Activated CD4-positive, alpha-beta T cell treated with anti-CD3 and anti-CD28 coated beads, Interleukin-2, amount 10 ng/mL, durations not matched to agents 7 days and 5 days (primary cell): ENCODE measurements at regions of chr1 and their contacts with region 1.

Region 1: GRCh38 chr1:110619412-110620249 is 13.5 kb upstream of the KCNA2 start:
- DNase-seq: peak; percentile 92
- H3K4me3 Mint-ChIP-seq: peak overlapping the region; percentile 78
- H3K27ac Mint-ChIP-seq: peak overlapping the region; percentile 97
- H3K4me1 Mint-ChIP-seq: peaks cover 56% of the 10 kb centered on the region
- H3K27me3 Mint-ChIP-seq: no peaks in the 10 kb centered on the region

Region 2: GRCh38 chr1:110605901-110606656 is 13.6 kb before region 1 on chr1 and contains the start of gene KCNA2:
- CTCF ChIA-PET with region 1: interaction called, 13 read pairs
- POLR2A ChIA-PET with region 1: no interaction called
- DNase-seq: no peak
- H3K4me3 Mint-ChIP-seq: peak within 1 kb of the TSS; percentile 67
- H3K27ac Mint-ChIP-seq: peak within 1 kb of the TSS; percentile 46
- H3K4me1 Mint-ChIP-seq: peaks cover 29% of the 10 kb centered on the region
- H3K27me3 Mint-ChIP-seq: peaks cover 50% of the 10 kb centered on the region
- total RNA-seq, gene KCNA2: 3.5 to 3.9 TPM

Region 3: DNA sequence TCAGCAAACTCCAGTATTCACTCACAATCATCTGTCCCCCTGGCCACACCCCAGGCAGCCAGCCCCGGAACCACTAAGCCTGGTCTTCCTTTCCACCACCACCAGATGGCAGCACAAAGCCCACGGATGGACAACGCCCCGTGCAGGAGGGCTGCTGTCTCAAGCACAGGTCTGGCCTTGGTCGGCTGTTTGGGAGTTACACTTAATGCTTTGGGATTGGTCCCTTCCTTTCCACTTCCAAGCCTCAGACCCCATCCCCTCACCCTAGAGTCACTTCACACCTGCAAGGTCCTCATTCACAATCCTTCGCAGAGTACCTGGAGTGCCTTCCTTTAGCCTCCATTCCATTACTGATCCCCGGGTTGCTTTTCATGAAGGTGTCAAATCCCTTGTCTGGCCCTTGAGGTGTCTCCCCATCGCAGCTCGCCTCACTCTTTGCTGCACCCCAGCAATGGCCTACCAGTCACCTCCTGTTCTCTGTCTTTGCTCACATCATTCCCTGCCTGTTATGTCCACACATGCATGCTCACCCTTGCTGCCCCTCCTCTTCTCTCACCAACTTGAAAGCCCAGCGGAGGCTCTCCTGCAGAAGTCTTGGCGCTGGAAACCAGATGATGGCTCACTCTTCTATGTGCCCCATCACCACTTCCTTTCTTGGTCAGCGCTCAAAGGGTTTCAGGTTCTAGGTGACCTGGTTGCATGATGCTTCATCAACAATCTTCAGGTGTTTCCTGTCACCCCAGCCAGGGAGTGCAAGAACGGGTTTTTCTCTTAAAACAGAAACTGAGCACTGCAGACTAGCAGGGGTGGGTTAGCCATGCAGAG is 11.4 kb after region 1 on chr1:
- CTCF ChIA-PET with region 1: interaction called, 34 read pairs
- POLR2A ChIA-PET with region 1: interaction called, 6 read pairs
- DNase-seq: peak; percentile 93
- H3K4me3 Mint-ChIP-seq: no peak overlapping the region
- H3K27ac Mint-ChIP-seq: no peak overlapping the region
- H3K4me1 Mint-ChIP-seq: peaks cover 33% of the 10 kb centered on the region
- H3K27me3 Mint-ChIP-seq: no peaks in the 10 kb centered on the region

Region 4: DNA sequence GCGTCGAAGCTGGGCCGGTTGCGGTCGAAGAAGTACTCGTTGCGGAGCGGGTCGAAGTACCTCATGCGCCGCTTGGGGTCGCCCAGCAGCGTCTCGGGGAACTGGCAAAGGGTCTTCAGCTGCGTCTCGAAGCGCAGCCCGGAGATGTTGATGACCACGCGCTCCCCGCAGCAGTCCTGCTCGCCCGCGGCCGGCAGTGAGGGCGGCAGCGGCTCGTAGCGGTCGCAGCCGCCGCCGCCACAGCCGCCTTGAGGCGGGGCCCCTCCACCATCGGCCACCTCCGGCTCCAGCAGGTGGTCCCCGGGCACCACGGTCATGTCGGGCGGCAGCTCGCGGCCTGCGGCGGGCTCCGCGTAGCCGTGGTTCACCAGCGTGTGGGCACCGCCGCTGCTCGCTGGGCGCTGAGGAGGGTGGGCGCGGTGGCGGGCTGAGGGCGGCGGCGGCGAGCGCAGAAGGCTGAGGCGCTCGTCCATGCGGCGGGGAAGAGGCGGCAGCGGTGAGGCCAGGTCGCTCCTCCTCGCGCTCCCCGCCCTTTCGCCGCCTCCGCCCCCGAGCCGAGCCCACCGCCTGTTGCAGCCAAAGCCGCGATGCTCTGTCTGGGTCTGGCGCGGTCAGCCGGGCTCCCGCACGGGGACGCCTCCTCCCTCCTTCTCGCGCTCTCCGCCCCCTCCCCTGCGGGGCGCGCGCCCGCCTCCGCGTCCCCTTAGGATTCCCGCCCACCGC is 54.9 kb after region 1 on chr1 and contains the start of gene KCNA3:
- CTCF ChIA-PET with region 1: interaction called, 14 read pairs
- POLR2A ChIA-PET with region 1: interaction called, 11 read pairs
- DNase-seq: peak; percentile 67
- H3K4me3 Mint-ChIP-seq: peak within 1 kb of the TSS; percentile 95
- H3K27ac Mint-ChIP-seq: peak within 1 kb of the TSS; percentile 98
- H3K4me1 Mint-ChIP-seq: peaks cover 30% of the 10 kb centered on the region
- H3K27me3 Mint-ChIP-seq: no peaks in the 10 kb centered on the region
- total RNA-seq, gene KCNA3: 67.0 to 73.3 TPM

Region 5: GRCh38 chr1:110766025-110766647 is 146.5 kb after region 1 on chr1:
- CTCF ChIA-PET with region 1: interaction called, 50 read pairs
- POLR2A ChIA-PET with region 1: interaction called, 6 read pairs
- DNase-seq: peak; percentile 76
- H3K4me3 Mint-ChIP-seq: peak overlapping the region; percentile 6
- H3K27ac Mint-ChIP-seq: peak overlapping the region; percentile 34
- H3K4me1 Mint-ChIP-seq: peaks cover 10% of the 10 kb centered on the region
- H3K27me3 Mint-ChIP-seq: peaks cover 30% of the 10 kb centered on the region

Region 6: GRCh38 chr1:110780600-110781484 is 161.2 kb after region 1 on chr1:
- CTCF ChIA-PET with region 1: interaction called, 77 read pairs
- POLR2A ChIA-PET with region 1: interaction called, 3 read pairs
- DNase-seq: peak; percentile 84
- H3K4me3 Mint-ChIP-seq: no peak overlapping the region
- H3K27ac Mint-ChIP-seq: no peak overlapping the region
- H3K4me1 Mint-ChIP-seq: peaks cover 39% of the 10 kb centered on the region
- H3K27me3 Mint-ChIP-seq: peaks cover 6% of the 10 kb centered on the region

Region 7: GRCh38 chr1:110787328-110788071 is 167.9 kb after region 1 on chr1:
- CTCF ChIA-PET with region 1: interaction called, 77 read pairs
- POLR2A ChIA-PET with region 1: interaction called, 10 read pairs
- DNase-seq: peak; percentile 83
- H3K4me3 Mint-ChIP-seq: peak overlapping the region; percentile 62
- H3K27ac Mint-ChIP-seq: peak overlapping the region; percentile 93
- H3K4me1 Mint-ChIP-seq: peaks cover 78% of the 10 kb centered on the region
- H3K27me3 Mint-ChIP-seq: no peaks in the 10 kb centered on the region